ENCODE measurements at regions of chr3 and their contacts with region 1.

Region 1: DNA sequence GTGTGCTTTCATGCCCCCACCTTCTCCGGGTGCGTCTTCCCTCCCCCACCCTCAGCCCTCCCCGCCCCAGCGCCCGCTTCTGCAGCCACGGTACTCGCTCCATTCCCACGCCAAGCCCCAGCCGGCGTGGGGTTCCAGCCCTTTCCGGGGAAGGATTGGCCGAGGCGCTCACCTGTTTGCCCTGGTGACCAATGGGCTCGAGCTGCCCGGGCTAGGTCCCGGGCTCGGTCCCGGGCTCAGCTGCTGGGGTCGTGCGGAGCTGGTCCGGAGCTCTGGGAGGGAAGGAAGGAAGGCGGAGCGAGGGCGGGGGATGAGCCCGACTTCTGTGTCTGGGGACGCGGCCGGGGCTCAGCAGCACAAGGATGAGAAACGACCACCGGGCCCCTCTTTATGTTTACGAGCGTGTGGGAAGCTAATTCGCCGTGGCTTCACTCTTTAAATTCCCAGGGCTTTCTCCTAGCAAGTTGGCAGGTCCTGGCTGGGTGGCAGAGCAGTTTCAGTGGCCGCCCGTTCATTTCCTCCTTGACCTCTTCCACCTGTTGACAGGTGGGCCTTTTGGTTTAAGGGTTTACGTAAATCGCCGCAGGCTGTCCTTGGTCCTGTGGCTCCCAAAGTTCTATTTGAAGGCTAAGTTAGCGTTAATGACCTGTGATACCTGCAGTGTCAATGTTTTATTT is at the start of gene IGSF10:
- DNase-seq: no peak
- ATAC-seq: no peak
- H3K4me3 ChIP-seq: no peak within 1 kb of the TSS
- H3K4me3 Mint-ChIP-seq: peak within 1 kb of the TSS; percentile 35
- H3K27ac ChIP-seq: no peak within 1 kb of the TSS
- H3K27ac Mint-ChIP-seq: no peak within 1 kb of the TSS
- H3K4me1 ChIP-seq: no peaks in the 10 kb centered on the region
- H3K4me1 Mint-ChIP-seq: peaks cover 4% of the 10 kb centered on the region
- H3K27me3 ChIP-seq: peaks cover 14 to 30% of the 10 kb centered on the region in 2 experiments
- H3K27me3 Mint-ChIP-seq: peaks cover 41% of the 10 kb centered on the region
- CTCF ChIP-seq: no peak
- total RNA-seq, gene IGSF10: not detected

Region 2: GRCh38 chr3:151431940-151432339 is 29.0 kb before region 1 on chr3:
- CTCF ChIA-PET with region 1: no interaction called
- POLR2A ChIA-PET with region 1: no interaction called
- intact Hi-C with region 1: loop called in 1 of 2 experiments (anchors 1 kb)
- DNase-seq: no peak
- ATAC-seq: no peak
- H3K4me3 ChIP-seq: no peak overlapping the region
- H3K4me3 Mint-ChIP-seq: no peak overlapping the region
- H3K27ac ChIP-seq: no peak overlapping the region
- H3K27ac Mint-ChIP-seq: no peak overlapping the region
- H3K4me1 ChIP-seq: no peaks in the 10 kb centered on the region
- H3K4me1 Mint-ChIP-seq: no peaks in the 10 kb centered on the region
- H3K27me3 ChIP-seq: no peaks in the 10 kb centered on the region
- H3K27me3 Mint-ChIP-seq: no peaks in the 10 kb centered on the region
- CTCF ChIP-seq: no peak

Region 3: GRCh38 chr3:151795276-151795675 is 334.4 kb after region 1 on chr3:
- CTCF ChIA-PET with region 1: no interaction called
- POLR2A ChIA-PET with region 1: no interaction called
- intact Hi-C with region 1: no loop called
- DNase-seq: no peak
- ATAC-seq: no peak
- H3K4me3 ChIP-seq: no peak overlapping the region
- H3K4me3 Mint-ChIP-seq: no peak overlapping the region
- H3K27ac ChIP-seq: no peak overlapping the region
- H3K27ac Mint-ChIP-seq: no peak overlapping the region
- H3K4me1 ChIP-seq: no peaks in the 10 kb centered on the region
- H3K4me1 Mint-ChIP-seq: no peaks in the 10 kb centered on the region
- H3K27me3 ChIP-seq: no peaks in the 10 kb centered on the region
- H3K27me3 Mint-ChIP-seq: no peaks in the 10 kb centered on the region
- CTCF ChIP-seq: no peak

Region 4: DNA sequence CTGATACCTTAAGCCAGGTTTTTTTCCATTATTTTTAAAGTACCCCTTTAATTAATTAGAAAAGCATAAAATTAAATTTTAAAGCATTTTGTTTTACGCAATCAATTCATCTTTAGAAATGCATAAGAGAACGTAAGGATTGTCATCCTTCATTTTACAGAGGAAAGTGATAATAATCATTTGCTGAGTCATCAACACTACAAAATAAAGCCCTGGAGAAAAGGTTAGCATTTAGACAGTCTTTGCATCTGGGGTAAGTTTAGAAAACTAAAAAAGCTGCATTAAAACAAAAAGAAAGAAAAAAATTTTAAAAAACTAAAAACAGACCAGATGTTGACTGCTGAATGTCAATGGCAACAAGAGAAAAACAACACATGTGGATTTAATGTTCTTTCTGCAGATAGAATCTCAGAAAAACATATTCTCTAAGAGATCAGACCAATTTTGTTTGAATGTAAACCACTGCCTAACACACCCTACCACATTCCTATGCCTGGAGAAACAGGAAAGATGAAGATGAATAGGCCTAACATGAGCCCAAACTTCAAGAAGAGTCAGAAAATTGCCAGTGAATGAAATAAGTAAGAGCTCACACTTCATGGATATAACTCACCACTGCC is 472.4 kb after region 1 on chr3:
- CTCF ChIA-PET with region 1: no interaction called
- POLR2A ChIA-PET with region 1: no interaction called
- intact Hi-C with region 1: no loop called
- DNase-seq: no peak
- ATAC-seq: no peak
- H3K4me3 ChIP-seq: no peak overlapping the region
- H3K4me3 Mint-ChIP-seq: no peak overlapping the region
- H3K27ac ChIP-seq: no peak overlapping the region
- H3K27ac Mint-ChIP-seq: no peak overlapping the region
- H3K4me1 ChIP-seq: no peaks in the 10 kb centered on the region
- H3K4me1 Mint-ChIP-seq: no peaks in the 10 kb centered on the region
- H3K27me3 ChIP-seq: no peaks in the 10 kb centered on the region
- H3K27me3 Mint-ChIP-seq: no peaks in the 10 kb centered on the region
- CTCF ChIP-seq: no peak

Measured in CD4-positive, alpha-beta T cell (primary cell).